ENCODE measurements at regions of chr22 and their contacts with region 1.

Region 1: GRCh38 chr22:39932918-39933649 is 27.1 kb upstream of the TMA7B start:
- DNase-seq: peak in 7 of 9 experiments; percentile 27 to 85 (median 72)
- ATAC-seq: peak; percentile 66
- H3K4me3 ChIP-seq: peak overlapping the region in 1 of 2 experiments; percentile 35
- H3K4me3 Mint-ChIP-seq: peak overlapping the region; percentile 77
- H3K27ac ChIP-seq: peak overlapping the region; percentile 72
- H3K27ac Mint-ChIP-seq: no peak overlapping the region
- H3K4me1 ChIP-seq: peaks cover 98% of the 10 kb centered on the region
- H3K4me1 Mint-ChIP-seq: peaks cover 54% of the 10 kb centered on the region
- H3K27me3 ChIP-seq: no peaks in the 10 kb centered on the region
- H3K27me3 Mint-ChIP-seq: no peaks in the 10 kb centered on the region
- CTCF ChIP-seq: peak; percentile 62

Region 2: DNA sequence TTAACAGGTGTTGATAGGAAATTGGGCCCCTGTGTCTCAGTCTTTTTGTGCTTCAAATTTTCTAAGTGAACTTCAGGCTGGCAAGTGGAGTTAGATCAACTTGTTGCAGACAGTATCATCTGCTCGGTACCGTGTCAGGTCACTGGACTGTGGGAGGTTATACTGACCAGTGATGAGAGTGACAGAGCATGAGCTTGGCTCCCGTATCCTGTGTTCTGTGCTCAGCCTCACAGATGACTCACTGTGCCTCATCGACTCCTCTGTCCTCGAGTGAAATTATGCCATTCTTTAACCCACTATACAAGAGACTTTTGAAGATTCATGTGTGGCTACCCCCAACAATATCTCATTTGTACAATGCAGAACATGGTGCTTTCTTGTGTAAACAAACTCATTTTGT is 24.3 kb before region 1 on chr22:
- CTCF ChIA-PET with region 1: interaction called, 58 read pairs
- POLR2A ChIA-PET with region 1: interaction called, 260 read pairs
- intact Hi-C with region 1: no loop called
- DNase-seq: peak in 5 of 9 experiments; percentile 48 to 72 (median 53)
- ATAC-seq: peak; percentile 51
- H3K4me3 ChIP-seq: peak overlapping the region; percentile 57 to 77
- H3K4me3 Mint-ChIP-seq: peak overlapping the region; percentile 97
- H3K27ac ChIP-seq: peak overlapping the region; percentile 20 to 80
- H3K27ac Mint-ChIP-seq: peak overlapping the region; percentile 97
- H3K4me1 ChIP-seq: peaks cover 61% of the 10 kb centered on the region
- H3K4me1 Mint-ChIP-seq: peaks cover 79% of the 10 kb centered on the region
- H3K27me3 ChIP-seq: no peaks in the 10 kb centered on the region
- H3K27me3 Mint-ChIP-seq: no peaks in the 10 kb centered on the region
- CTCF ChIP-seq: no peak

Region 3: GRCh38 chr22:39917776-39918495 is 15.1 kb before region 1 on chr22:
- CTCF ChIA-PET with region 1: interaction called, 58 read pairs
- POLR2A ChIA-PET with region 1: interaction called, 260 read pairs
- intact Hi-C with region 1: loop called (anchors 1 to 2 kb)
- DNase-seq: peak in 1 of 9 experiments; percentile 51
- ATAC-seq: no peak
- H3K4me3 ChIP-seq: peak overlapping the region; percentile 15 to 46
- H3K4me3 Mint-ChIP-seq: peak overlapping the region; percentile 80
- H3K27ac ChIP-seq: peak overlapping the region; percentile 48 to 80
- H3K27ac Mint-ChIP-seq: peak overlapping the region; percentile 97
- H3K4me1 ChIP-seq: peaks cover 94% of the 10 kb centered on the region
- H3K4me1 Mint-ChIP-seq: peaks cover 91% of the 10 kb centered on the region
- H3K27me3 ChIP-seq: no peaks in the 10 kb centered on the region
- H3K27me3 Mint-ChIP-seq: no peaks in the 10 kb centered on the region
- CTCF ChIP-seq: no peak

Region 4: GRCh38 chr22:40243891-40244290 is 310.8 kb after region 1 on chr22:
- CTCF ChIA-PET with region 1: no interaction called
- POLR2A ChIA-PET with region 1: no interaction called
- intact Hi-C with region 1: no loop called
- DNase-seq: peak in 3 of 9 experiments; percentile 22 to 68 (median 47)
- ATAC-seq: no peak
- H3K4me3 ChIP-seq: no peak overlapping the region
- H3K4me3 Mint-ChIP-seq: peak overlapping the region; percentile 38
- H3K27ac ChIP-seq: peak overlapping the region in 1 of 2 experiments; percentile 11
- H3K27ac Mint-ChIP-seq: peak overlapping the region; percentile 71
- H3K4me1 ChIP-seq: peaks cover 78% of the 10 kb centered on the region
- H3K4me1 Mint-ChIP-seq: peaks cover 80% of the 10 kb centered on the region
- H3K27me3 ChIP-seq: no peaks in the 10 kb centered on the region
- H3K27me3 Mint-ChIP-seq: no peaks in the 10 kb centered on the region
- CTCF ChIP-seq: no peak